ENCODE measurements at regions of chr2 and their contacts with region 1.

Region 1: DNA sequence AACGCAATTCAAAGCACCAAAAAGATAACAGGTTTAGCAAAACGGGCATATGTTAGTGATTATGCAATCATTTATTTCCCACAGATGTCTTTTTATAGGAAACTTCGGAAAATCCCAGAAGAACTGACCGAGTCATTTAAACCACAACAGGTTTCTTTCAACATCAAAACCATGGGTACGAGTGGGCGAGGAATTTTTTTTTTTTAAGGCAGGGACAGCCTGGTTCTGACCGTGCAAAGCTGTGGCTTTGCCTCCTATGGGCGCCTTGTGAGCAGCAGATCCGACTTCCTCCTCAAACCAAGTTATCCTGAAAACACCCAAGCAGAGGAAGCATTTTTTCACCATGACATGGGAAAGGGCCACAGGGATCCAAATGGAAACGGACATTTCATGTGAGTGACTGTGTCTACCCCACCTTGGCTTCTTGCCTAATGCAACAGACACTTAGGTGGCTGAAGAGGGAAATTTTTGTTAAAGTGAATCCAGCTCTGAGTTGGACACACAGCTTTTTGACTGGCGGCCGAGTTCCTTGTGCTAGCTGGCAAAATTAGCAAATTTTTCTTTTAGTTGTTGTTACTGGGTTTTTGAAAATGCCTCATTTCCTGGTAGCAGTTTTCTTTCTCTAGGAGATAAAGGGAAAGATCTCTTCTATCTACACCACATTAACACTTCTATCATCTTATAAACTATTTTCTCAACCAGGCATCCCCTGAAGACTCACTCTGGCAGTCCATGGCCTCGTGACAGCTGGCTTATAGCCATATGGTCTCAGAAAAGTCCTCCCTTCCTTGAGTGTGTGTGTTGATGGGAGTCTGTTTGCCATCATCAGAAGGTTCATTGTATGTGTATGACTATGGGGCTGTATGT is 487.4 kb upstream of the ZEB2 start:
- DNase-seq: peak; percentile 98
- ATAC-seq: peak; percentile 97
- H3K4me3 ChIP-seq: peak overlapping the region; percentile 19; the same call in 1 of the 2 replicates
- H3K27ac ChIP-seq: peak overlapping the region; percentile 65
- H3K4me1 ChIP-seq: peaks cover 3% of the 10 kb centered on the region; the same call in 1 of the 2 replicates
- H3K27me3 ChIP-seq: no peaks in the 10 kb centered on the region
- CTCF ChIP-seq: no peak
- POLR2A ChIP-seq: peak; percentile 64
- RAD21 ChIP-seq: peak; percentile 41

Region 2: DNA sequence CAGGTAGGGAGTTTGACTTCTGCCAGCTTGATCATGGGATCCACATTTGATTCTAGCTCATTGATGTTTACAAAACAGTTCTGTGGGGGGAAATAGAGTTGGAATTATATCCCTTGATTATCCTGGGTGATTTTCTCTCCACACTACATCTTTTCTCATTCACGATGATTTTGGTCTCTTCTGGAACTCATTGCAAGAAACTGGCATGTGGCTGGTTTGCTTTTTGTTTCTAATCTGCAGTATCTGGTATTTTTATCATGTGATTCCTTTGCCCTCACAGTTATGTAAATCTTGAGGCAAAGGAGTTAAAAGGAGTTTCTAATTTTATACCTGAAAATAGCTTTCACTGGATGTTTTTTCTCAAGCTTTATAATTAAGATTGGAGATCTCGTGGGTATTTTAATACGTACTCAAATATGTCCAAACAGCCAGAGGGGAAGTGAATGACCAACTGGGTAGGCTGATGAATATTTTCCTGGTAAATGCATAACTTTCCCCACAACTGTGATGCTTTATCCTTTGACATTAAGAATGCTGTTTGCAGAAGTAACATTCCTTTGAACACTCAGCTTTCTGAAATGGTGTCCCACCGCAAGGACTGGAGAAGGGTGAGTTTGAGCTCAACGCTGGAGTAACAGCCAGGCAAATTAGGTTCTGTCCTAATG is 15.5 kb after region 1 on chr2:
- CTCF ChIA-PET with region 1: no interaction called
- POLR2A ChIA-PET with region 1: interaction called, 19 read pairs
- dilution Hi-C with region 1: no loop called
- in situ Hi-C with region 1: no loop called
- intact Hi-C with region 1: no loop called
- DNase-seq: peak; percentile 89
- ATAC-seq: peak; percentile 83
- H3K4me3 ChIP-seq: no peak overlapping the region
- H3K27ac ChIP-seq: peak overlapping the region; percentile 14; the same call in 1 of the 2 replicates
- H3K4me1 ChIP-seq: peaks cover 11% of the 10 kb centered on the region
- H3K27me3 ChIP-seq: no peaks in the 10 kb centered on the region
- CTCF ChIP-seq: no peak
- POLR2A ChIP-seq: no peak
- RAD21 ChIP-seq: 0 out of 2 replicates have a peak, but pooled peaks have one; percentile 11

Region 3: GRCh38 chr2:145546091-145546490 is 538.8 kb after region 1 on chr2:
- CTCF ChIA-PET with region 1: no interaction called
- POLR2A ChIA-PET with region 1: interaction called, 11 read pairs
- dilution Hi-C with region 1: no loop called
- in situ Hi-C with region 1: no loop called
- intact Hi-C with region 1: no loop called
- DNase-seq: peak; percentile 76
- ATAC-seq: peak; percentile 94
- H3K4me3 ChIP-seq: no peak overlapping the region
- H3K27ac ChIP-seq: peak overlapping the region; percentile 34; the same call in 1 of the 2 replicates
- H3K4me1 ChIP-seq: peaks cover 2% of the 10 kb centered on the region; the same call in 1 of the 2 replicates
- H3K27me3 ChIP-seq: no peaks in the 10 kb centered on the region
- CTCF ChIP-seq: peak; percentile 44
- POLR2A ChIP-seq: no peak
- RAD21 ChIP-seq: peak; percentile 39

Measured in IMR-90 (cell line).